ENCODE measurements at regions of chr6 and their contacts with region 1.

Region 1: GRCh38 chr6:1604158-1605030 is 5.3 kb upstream of the FOXC1 start:
- DNase-seq: peak; percentile 83
- ATAC-seq: peak; percentile 91 to 92

Region 2: DNA sequence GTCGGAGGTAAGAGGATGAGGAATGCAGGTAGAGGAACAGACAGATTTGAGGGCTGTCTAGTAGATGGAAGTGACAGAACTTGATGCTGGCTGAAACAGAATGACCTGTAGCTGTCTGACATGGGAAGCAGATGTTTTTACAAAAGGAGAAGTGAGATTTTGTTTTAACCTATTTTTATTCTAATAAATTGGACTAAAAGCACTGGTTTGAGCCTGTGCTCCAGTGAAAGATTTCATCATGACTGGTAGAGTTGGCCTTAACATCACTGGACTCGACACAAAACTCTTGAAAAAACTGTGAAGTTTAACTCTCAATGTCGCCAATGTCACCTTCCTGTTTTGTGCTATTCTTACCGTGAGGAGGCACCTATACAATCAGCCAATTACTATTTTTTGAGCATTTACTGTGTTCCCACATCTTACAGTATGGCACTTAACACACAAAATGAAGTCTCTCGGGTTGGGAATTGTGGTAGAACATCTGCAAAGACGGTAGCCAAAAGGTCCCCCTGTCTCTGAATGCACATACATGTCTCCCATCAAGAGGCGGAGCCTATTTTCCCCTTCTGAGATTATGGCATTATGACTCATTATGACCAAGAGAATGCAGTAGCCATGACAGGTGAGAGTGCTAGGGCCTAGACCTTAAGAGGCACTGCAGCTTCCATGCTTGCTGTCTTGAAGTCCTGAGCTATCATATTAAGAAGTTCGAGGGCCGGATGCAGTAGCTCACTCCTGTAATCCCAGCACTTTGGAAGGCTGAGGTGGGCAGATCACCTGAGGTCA is 121.8 kb before region 1 on chr6:
- intact Hi-C with region 1: no loop called
- DNase-seq: no peak
- ATAC-seq: no peak

Region 3: DNA sequence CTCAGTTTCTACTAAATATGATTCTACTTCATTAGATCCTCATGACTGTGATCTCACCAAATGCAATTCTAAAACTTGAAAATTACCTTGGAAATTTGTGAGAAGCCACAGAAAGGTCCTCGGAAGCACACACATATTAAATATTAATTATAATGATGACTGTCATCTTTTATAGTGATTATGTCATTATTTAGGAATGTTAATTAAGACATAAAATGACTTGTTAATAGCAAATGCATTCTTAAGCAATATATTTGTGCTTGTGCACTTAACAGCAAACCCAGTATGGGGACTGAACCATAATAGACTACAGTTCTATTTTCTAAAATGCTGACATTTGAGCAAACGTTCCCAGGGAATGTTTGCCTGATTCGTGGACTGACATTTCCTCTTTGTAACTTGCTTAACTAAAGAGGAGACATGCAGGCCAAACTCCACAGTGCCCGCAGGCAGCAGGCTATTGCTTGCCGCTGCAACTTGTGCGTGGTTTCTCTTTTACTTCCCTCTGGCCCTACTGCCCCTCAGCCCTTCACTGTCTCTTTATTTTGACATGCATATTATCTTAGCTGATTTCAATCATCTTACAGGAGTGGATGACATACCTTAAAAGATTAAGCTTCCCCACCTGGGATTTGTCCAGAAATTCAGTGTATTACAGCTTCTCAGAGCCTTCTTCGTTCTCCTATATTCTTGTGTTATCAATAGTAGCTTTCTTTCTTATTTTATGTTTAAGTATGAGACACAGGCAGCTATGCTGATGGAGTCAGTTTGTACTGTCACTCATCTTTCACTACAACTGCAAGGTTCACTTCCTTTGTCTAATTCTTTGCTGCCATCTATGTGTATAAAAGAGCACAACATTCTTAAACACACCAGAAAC is 499.5 kb after region 1 on chr6:
- intact Hi-C with region 1: loop called (anchors 5 kb)
- DNase-seq: no peak
- ATAC-seq: peak; percentile 73 to 83

Region 4: GRCh38 chr6:2196079-2196679 is 591.8 kb after region 1 on chr6:
- intact Hi-C with region 1: loop called (anchors 5 kb)
- DNase-seq: no peak
- ATAC-seq: peak; percentile 53 to 77

Region 5: GRCh38 chr6:2448820-2449571 is 844.6 kb after region 1 on chr6:
- intact Hi-C with region 1: loop called (anchors 2 to 10 kb)
- DNase-seq: no peak
- ATAC-seq: peak; percentile 52 to 77

Region 6: GRCh38 chr6:2695454-2696095 is 1091.2 kb after region 1 on chr6:
- intact Hi-C with region 1: loop called (anchors 5 kb)
- DNase-seq: no peak
- ATAC-seq: peak in 1 of 2 donors; percentile 54

Measured in left cardiac atrium (tissue), 4 donors.